AG04450 (cell line): ENCODE measurements at regions of chr22 and their contacts with region 1.

Region 1: DNA sequence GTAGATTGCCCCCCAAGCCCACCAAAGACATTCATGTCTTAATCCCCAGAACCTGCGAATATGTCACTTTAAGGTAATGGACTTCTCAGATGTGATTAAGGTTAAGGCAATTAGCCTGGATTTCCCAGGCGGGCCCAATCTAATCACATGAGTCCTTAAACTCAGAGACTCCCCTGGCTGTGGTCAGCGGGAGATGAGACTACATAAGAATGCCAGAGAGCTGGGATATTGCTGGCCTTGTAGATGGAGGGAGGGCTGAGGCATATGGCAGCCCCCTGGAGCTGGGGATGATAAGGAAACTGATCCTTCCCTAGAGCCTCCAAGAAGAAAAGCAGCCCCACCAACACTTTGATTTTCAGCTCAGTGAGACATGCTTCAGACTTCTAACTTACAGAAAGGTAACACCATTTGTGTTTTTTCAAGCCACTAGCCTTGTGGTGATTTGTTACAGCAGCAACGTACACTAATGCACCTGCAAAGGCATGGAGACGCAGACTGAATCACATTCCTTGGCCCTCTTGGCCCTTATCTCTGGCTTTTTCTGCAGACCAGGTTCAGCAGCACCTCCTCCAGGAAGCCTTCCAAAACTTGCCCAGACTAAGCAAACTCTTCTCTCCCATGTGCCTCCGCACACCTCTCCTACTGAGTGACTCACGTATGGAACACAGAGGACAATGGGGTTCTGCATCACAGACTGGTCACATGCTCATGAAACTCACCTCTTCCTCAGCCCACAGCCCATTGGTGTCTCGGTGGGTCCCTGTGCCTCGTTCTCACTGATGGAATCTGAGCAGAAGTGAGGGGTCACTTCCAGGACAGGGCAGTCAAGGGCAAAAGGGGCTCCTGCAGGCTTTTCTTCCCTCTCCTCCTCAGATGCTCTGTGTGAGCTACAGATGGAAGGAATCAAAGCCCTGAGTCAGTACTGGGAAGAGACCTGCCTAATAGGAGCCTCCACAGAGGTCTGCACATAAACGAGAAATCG is 86.3 kb upstream of the HMGXB4 start:
- DNase-seq: no peak
- H3K4me3 ChIP-seq: no peak overlapping the region
- H3K27ac ChIP-seq: no peak overlapping the region
- H3K27me3 ChIP-seq: peaks cover 2% of the 10 kb centered on the region
- CTCF ChIP-seq: no peak

Region 2: DNA sequence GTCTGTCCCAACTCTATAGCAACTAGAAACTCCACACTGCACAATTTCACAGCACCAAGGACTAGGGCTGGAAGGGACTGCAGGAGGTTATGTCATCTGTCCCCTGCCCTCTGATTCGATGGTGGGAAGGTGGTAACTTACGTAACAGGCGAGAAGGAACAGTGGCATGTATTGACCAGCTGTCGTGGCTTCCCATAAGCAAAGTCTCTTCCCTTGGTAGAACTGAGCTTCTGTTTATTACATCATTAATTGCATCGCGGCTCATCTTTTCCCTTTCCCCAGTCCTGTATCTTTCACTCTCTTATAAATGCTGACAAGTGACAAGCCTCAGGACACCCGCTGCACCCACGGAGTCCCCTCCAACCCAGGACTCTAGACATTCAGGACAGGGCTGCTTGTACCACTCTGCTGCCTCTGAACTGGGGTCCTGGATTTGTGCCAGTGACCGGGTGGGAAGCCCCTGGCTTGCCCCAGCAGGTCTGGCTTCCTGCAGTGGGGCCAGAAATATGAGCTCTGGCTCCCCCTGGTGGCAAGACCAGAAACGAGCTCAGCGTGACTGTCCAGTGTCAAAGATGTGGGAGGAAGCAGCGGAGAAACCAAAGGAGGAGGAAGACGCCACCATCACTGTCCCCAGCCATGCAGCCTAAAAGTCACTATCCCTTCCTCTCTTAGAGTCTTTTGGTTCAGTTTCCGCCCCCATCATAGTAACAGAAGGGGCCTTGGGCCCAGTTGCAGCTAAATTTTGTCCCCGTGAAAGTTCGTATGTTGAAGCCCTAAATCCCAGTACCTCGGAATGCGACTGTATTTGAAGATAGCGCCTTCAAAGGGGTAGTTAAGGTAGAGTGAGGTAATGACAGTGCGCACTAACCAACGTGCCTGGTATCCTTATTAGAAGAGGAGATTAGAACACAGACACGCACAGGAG is 20.6 kb before region 1 on chr22:
- CTCF ChIA-PET with region 1: interaction called, 10 read pairs
- POLR2A ChIA-PET with region 1: no interaction called
- DNase-seq: no peak
- H3K4me3 ChIP-seq: no peak overlapping the region
- H3K27ac ChIP-seq: no peak overlapping the region
- H3K27me3 ChIP-seq: no peaks in the 10 kb centered on the region
- CTCF ChIP-seq: peak; percentile 76

Region 3: GRCh38 chr22:35288116-35288515 is 117.1 kb after region 1 on chr22:
- CTCF ChIA-PET with region 1: no interaction called
- POLR2A ChIA-PET with region 1: no interaction called
- DNase-seq: no peak
- H3K4me3 ChIP-seq: no peak overlapping the region
- H3K27ac ChIP-seq: no peak overlapping the region
- H3K27me3 ChIP-seq: no peaks in the 10 kb centered on the region
- CTCF ChIP-seq: no peak